GM10248 (cell line): ENCODE measurements at regions of chr7 and their contacts with region 1.

Region 1: GRCh38 chr7:5557920-5558401 is 134.3 kb upstream of the TNRC18 start:
- DNase-seq: peak; percentile 75
- CTCF ChIP-seq: no peak

Region 2: DNA sequence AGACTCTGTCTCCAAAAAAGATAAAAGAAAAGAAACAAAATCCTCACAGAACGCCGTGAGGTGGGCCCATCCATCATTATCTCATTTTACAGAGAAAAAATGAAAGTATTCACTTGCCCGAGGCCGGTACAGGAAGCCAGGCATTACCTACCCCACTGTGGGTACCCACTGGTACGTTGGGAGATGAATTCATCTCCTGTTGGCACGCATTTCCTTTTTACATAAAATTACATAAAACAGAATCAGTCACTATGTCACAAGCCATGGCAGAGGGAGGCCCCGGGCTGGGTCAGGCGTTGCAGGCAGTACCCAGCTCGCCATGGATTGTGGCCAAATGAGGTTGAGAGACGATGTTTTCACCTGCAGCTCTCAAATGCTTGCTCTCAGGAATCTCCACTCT is 95.7 kb before region 1 on chr7:
- CTCF ChIA-PET with region 1: no interaction called
- POLR2A ChIA-PET with region 1: no interaction called
- DNase-seq: no peak
- CTCF ChIP-seq: no peak

Region 3: GRCh38 chr7:5526100-5526905 is 31.7 kb before region 1 on chr7:
- CTCF ChIA-PET with region 1: no interaction called
- POLR2A ChIA-PET with region 1: interaction called, 23 read pairs
- DNase-seq: no peak
- CTCF ChIP-seq: peak; percentile 34

Region 4: GRCh38 chr7:5532520-5533335 is 25.2 kb before region 1 on chr7:
- CTCF ChIA-PET with region 1: interaction called, 10 read pairs
- POLR2A ChIA-PET with region 1: interaction called, 4 read pairs
- DNase-seq: peak; percentile 87
- CTCF ChIP-seq: no peak

Region 5: GRCh38 chr7:5541087-5541992 is 16.6 kb before region 1 on chr7:
- CTCF ChIA-PET with region 1: interaction called, 37 read pairs
- POLR2A ChIA-PET with region 1: interaction called, 3 read pairs
- DNase-seq: no peak
- CTCF ChIP-seq: no peak

Region 6: GRCh38 chr7:5546626-5547025 is 11.3 kb before region 1 on chr7:
- CTCF ChIA-PET with region 1: interaction called, 37 read pairs
- POLR2A ChIA-PET with region 1: no interaction called
- DNase-seq: no peak
- CTCF ChIP-seq: no peak

Region 7: DNA sequence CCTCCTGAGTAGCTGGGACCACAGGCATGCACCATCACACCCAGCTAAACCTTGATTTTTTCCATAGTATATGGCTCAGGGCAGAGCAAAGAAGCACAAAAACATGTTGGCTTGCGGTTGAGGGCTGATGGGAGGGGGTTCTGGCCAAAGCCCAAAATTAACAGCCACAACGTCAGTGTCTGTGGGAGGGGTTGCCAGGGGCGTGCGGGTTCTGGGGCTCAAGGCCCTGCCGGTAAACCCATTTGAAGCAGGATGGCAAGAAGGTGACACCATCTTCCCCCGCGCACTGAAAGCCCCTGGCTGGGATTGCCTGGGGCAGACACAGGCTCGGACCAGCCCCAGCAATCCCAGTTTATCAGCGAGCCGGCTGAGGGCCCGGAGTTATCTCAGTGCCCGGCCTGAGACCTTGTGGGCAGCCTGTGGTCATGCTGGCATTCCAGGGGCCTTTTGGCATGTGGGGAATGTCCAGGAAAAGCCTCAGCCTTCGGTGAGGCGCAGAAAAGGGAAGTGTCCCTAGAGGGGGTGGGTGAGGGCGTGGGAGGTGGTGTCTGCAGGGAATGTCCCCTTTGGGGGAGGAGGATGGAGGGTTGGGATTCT is 33.4 kb after region 1 on chr7:
- CTCF ChIA-PET with region 1: interaction called, 10 read pairs
- POLR2A ChIA-PET with region 1: interaction called, 7 read pairs
- DNase-seq: no peak
- CTCF ChIP-seq: no peak

Region 8: GRCh38 chr7:5677538-5678294 is 119.8 kb after region 1 on chr7:
- CTCF ChIA-PET with region 1: interaction called, 30 read pairs
- POLR2A ChIA-PET with region 1: no interaction called
- DNase-seq: peak; percentile 48
- CTCF ChIP-seq: peak; percentile 70